ENCODE measurements at regions of chr5 and their contacts with region 1.

Region 1: DNA sequence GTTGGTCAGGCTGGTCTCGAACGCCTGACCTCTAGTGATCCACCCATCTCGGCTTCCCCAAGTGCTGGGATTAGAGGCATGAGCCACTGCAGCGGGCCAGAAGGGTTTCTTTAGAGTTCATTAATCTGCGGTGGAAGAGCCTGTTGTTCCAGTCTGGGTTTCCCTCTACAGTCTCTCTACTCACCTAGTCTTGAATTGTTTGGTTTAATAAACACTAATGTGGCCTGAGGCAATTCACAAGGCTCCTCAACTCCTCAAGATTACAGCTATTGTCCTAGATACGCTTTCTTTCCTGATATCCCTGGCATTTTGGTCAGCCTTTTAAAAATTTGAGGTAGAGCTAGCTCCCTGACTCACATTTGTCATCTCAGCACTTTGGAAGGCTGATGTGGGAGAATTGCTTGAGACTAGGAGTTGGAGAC is 4.5 kb upstream of the SAR1B start:
- DNase-seq: no peak
- ATAC-seq: no peak
- H3K4me3 ChIP-seq: no peak overlapping the region
- H3K4me3 Mint-ChIP-seq: no peak overlapping the region
- H3K27ac ChIP-seq: no peak overlapping the region
- H3K27ac Mint-ChIP-seq: no peak overlapping the region
- H3K4me1 ChIP-seq: no peaks in the 10 kb centered on the region
- H3K4me1 Mint-ChIP-seq: peaks cover under 1% of the 10 kb centered on the region
- H3K27me3 ChIP-seq: no peaks in the 10 kb centered on the region
- H3K27me3 Mint-ChIP-seq: no peaks in the 10 kb centered on the region
- CTCF ChIP-seq: no peak

Region 2: DNA sequence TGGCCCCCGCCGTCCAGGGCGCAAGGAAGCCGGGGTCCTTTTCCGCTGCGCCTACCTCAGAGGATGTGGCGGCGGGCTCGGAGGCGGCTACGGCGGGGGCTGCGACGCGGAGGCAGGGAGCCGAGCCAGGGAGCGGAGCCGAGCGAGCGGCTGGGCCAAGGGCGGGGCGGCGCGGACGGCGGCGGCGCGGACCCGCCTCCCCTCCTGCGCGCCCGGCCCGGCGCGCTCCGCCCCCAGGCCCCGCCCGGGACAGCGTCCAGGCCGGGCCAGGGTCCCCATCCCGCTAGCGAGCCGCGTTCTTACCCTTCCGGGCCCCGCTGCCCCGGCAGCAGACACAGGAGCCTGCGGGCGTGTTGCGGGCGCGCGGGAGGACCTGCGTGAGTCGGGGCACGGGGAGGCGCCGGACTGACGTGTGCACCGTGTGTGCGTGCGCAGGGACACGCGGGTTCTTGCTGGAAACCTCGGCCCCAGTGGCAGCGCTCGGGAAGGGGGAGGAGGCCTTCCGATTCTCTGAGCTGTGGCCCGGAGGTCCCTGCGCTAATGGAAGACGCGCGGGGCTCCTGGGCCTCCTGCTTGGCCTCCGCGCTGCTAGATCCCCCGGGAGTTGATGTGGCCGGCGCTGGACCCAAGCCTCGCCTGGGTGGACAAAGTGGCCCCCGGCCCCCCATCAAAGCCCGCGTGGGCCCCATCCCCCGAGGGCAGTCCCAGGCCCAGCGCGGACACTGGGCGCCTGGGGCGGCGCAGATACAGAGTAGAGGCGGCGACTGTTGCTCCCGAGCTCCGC is 632.4 kb before region 1 on chr5 and contains the start of gene VDAC1:
- CTCF ChIA-PET with region 1: no interaction called
- POLR2A ChIA-PET with region 1: no interaction called
- intact Hi-C with region 1: loop called in 1 of 2 experiments (anchors 5 kb)
- DNase-seq: peak; percentile 68 to 96 (median 86)
- ATAC-seq: peak; percentile 80
- H3K4me3 ChIP-seq: peak within 1 kb of the TSS; percentile 68 to 81
- H3K4me3 Mint-ChIP-seq: peak within 1 kb of the TSS; percentile 95
- H3K27ac ChIP-seq: peak within 1 kb of the TSS; percentile 81 to 98
- H3K27ac Mint-ChIP-seq: peak within 1 kb of the TSS; percentile 97
- H3K4me1 ChIP-seq: peaks cover 30% of the 10 kb centered on the region
- H3K4me1 Mint-ChIP-seq: peaks cover 43% of the 10 kb centered on the region
- H3K27me3 ChIP-seq: no peaks in the 10 kb centered on the region
- H3K27me3 Mint-ChIP-seq: no peaks in the 10 kb centered on the region
- CTCF ChIP-seq: no peak
- total RNA-seq, gene VDAC1: 68.1 to 71.1 TPM

Region 3: GRCh38 chr5:134365604-134366003 is 271.6 kb before region 1 on chr5:
- CTCF ChIA-PET with region 1: no interaction called
- POLR2A ChIA-PET with region 1: no interaction called
- intact Hi-C with region 1: loop called (anchors 1 to 2 kb)
- DNase-seq: no peak
- ATAC-seq: no peak
- H3K4me3 ChIP-seq: no peak overlapping the region
- H3K4me3 Mint-ChIP-seq: peak overlapping the region; percentile 26
- H3K27ac ChIP-seq: no peak overlapping the region
- H3K27ac Mint-ChIP-seq: no peak overlapping the region
- H3K4me1 ChIP-seq: peaks cover 21% of the 10 kb centered on the region
- H3K4me1 Mint-ChIP-seq: peaks cover 31% of the 10 kb centered on the region
- H3K27me3 ChIP-seq: no peaks in the 10 kb centered on the region
- H3K27me3 Mint-ChIP-seq: no peaks in the 10 kb centered on the region
- CTCF ChIP-seq: no peak

Measured in CD8-positive, alpha-beta T cell (primary cell).